PC-3 (cell line): ENCODE measurements at regions of chr20 and their contacts with region 1.

Region 1: GRCh38 chr20:58236612-58237330 is 8.3 kb upstream of the ANKRD60 start:
- DNase-seq: peak; percentile 90
- ATAC-seq: peak; percentile 88
- H3K4me3 ChIP-seq: peak overlapping the region; percentile 71
- H3K27ac ChIP-seq: peak overlapping the region; percentile 40
- H3K4me1 ChIP-seq: peaks cover 26% of the 10 kb centered on the region
- H3K27me3 ChIP-seq: no peaks in the 10 kb centered on the region
- CTCF ChIP-seq: peak; percentile 99

Region 2: GRCh38 chr20:57893366-57893999 is 343.3 kb before region 1 on chr20:
- CTCF ChIA-PET with region 1: no interaction called
- POLR2A ChIA-PET with region 1: no interaction called
- intact Hi-C with region 1: no loop called
- DNase-seq: no peak
- ATAC-seq: no peak
- H3K4me3 ChIP-seq: no peak overlapping the region
- H3K27ac ChIP-seq: no peak overlapping the region
- H3K4me1 ChIP-seq: no peaks in the 10 kb centered on the region
- H3K27me3 ChIP-seq: no peaks in the 10 kb centered on the region
- CTCF ChIP-seq: no peak

Region 3: GRCh38 chr20:58309575-58310290 is 73.0 kb after region 1 on chr20 and contains the start of gene RAB22A:
- CTCF ChIA-PET with region 1: no interaction called
- POLR2A ChIA-PET with region 1: no interaction called
- intact Hi-C with region 1: loop called (anchors 2 kb)
- DNase-seq: peak; percentile 84
- ATAC-seq: peak; percentile 62
- H3K4me3 ChIP-seq: peak within 1 kb of the TSS; percentile 86
- H3K27ac ChIP-seq: peak within 1 kb of the TSS; percentile 68
- H3K4me1 ChIP-seq: peaks cover 44% of the 10 kb centered on the region
- H3K27me3 ChIP-seq: no peaks in the 10 kb centered on the region
- CTCF ChIP-seq: no peak
- total RNA-seq, gene RAB22A: 47.4 and 55.0 TPM in 2 replicates

Region 4: GRCh38 chr20:58839474-58839874 is 602.7 kb after region 1 on chr20:
- CTCF ChIA-PET with region 1: interaction called, 3 read pairs
- POLR2A ChIA-PET with region 1: no interaction called
- intact Hi-C with region 1: loop called (anchors 10 kb)
- DNase-seq: peak; percentile 71
- ATAC-seq: peak; percentile 87
- H3K4me3 ChIP-seq: peak overlapping the region; percentile 61
- H3K27ac ChIP-seq: no peak overlapping the region
- H3K4me1 ChIP-seq: no peaks in the 10 kb centered on the region
- H3K27me3 ChIP-seq: peaks cover 38% of the 10 kb centered on the region
- CTCF ChIP-seq: peak; percentile 90